CD4-positive, alpha-beta memory T cell (primary cell): ENCODE measurements at regions of chr6 and their contacts with region 1.

Region 1: DNA sequence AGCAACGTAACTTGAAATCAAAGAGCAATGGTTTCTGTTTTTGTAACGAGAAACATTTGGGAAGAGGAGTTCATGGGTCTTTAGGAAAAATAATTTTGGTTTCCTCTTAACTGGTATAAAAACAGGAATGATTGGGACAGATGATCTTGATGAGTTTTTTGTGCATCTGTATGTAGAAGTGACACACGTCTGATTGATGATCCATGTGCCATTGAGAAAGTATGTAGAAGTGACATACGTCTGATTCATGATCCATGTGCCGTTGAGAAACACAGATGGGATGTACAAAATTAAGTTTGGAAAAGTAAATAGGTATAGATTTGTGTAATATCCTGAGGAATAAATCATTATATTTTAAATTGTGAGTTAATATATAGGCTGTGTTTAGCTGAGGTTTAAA is 2.1 kb downstream of the KIAA1586 start:
- DNase-seq: no peak
- H3K4me3 ChIP-seq: no peak overlapping the region
- H3K4me3 Mint-ChIP-seq: peak overlapping the region in 7 of 8 donors; percentile 3 to 76 (median 64)
- H3K27ac ChIP-seq: no peak overlapping the region
- H3K27ac Mint-ChIP-seq: peak overlapping the region in 3 of 7 donors; percentile 15 to 62 (median 23)
- H3K4me1 ChIP-seq: peaks cover 26% of the 10 kb centered on the region
- H3K4me1 Mint-ChIP-seq: peaks cover 19 to 40% (median 26%) of the 10 kb centered on the region in 4 donors
- H3K27me3 ChIP-seq: no peaks in the 10 kb centered on the region
- H3K27me3 Mint-ChIP-seq: no peaks in the 10 kb centered on the region

Region 2: GRCh38 chr6:57089687-57090460 is 41.3 kb after region 1 on chr6 and contains the start of gene ZNF451:
- CTCF ChIA-PET with region 1: no interaction called
- POLR2A ChIA-PET with region 1: interaction called, 3 read pairs
- intact Hi-C with region 1: loop called (anchors 1 kb)
- DNase-seq: peak; percentile 93 to 97 (median 94)
- H3K4me3 ChIP-seq: peak within 1 kb of the TSS; percentile 31 to 60
- H3K4me3 Mint-ChIP-seq: peak within 1 kb of the TSS; percentile 85 to 92 (median 90)
- H3K27ac ChIP-seq: peak within 1 kb of the TSS; percentile 60
- H3K27ac Mint-ChIP-seq: peak within 1 kb of the TSS; percentile 85 to 95 (median 92)
- H3K4me1 ChIP-seq: peaks cover 35% of the 10 kb centered on the region
- H3K4me1 Mint-ChIP-seq: peaks cover 22 to 38% (median 30%) of the 10 kb centered on the region in 4 donors
- H3K27me3 ChIP-seq: no peaks in the 10 kb centered on the region
- H3K27me3 Mint-ChIP-seq: no peaks in the 10 kb centered on the region
- total RNA-seq, gene ZNF451: 83.0 to 97.7 TPM

Region 3: DNA sequence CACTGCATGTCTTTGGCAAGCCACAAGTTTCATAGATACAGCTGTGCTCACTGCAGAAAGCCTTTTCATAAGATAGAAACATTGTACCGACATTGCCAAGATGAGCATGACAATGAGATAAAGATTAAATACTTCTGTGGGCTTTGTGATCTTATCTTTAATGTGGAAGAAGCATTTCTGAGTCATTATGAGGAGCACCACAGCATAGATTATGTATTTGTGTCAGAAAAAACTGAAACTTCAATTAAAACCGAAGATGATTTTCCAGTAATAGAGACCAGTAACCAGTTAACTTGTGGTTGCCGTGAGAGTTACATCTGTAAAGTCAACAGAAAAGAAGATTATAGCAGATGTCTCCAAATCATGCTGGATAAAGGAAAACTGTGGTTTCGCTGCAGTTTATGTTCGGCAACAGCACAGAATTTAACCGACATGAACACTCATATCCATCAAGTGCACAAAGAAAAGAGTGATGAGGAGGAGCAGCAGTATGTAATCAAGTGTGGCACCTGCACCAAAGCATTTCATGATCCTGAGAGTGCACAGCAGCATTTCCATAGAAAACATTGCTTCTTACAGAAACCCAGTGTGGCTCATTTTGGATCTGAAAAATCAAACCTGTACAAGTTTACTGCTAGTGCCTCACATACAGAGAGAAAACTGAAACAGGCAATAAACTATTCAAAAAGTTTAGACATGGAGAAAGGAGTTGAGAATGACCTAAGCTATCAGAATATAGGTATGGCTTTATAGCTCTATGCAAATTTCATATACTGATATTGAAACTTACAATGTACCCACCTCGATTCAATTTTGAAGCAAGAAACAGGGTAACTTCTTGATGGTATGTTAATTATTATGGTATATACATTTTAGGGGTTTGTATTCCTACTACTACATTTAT is 99.6 kb after region 1 on chr6:
- CTCF ChIA-PET with region 1: no interaction called
- POLR2A ChIA-PET with region 1: no interaction called
- intact Hi-C with region 1: no loop called
- DNase-seq: no peak
- H3K4me3 ChIP-seq: no peak overlapping the region
- H3K4me3 Mint-ChIP-seq: no peak overlapping the region
- H3K27ac ChIP-seq: no peak overlapping the region
- H3K27ac Mint-ChIP-seq: peak overlapping the region in 4 of 7 donors; percentile 7 to 58 (median 40)
- H3K4me1 ChIP-seq: peaks cover 10% of the 10 kb centered on the region
- H3K4me1 Mint-ChIP-seq: peaks cover 13 to 21% (median 15%) of the 10 kb centered on the region in 4 donors
- H3K27me3 ChIP-seq: no peaks in the 10 kb centered on the region
- H3K27me3 Mint-ChIP-seq: no peaks in the 10 kb centered on the region

Region 4: GRCh38 chr6:57172136-57173055 is 123.8 kb after region 1 on chr6 and contains the start of gene BAG2:
- CTCF ChIA-PET with region 1: no interaction called
- POLR2A ChIA-PET with region 1: no interaction called
- intact Hi-C with region 1: loop called (anchors 1 kb)
- DNase-seq: peak; percentile 83 to 93 (median 83)
- H3K4me3 ChIP-seq: peak within 1 kb of the TSS; percentile 55 to 71
- H3K4me3 Mint-ChIP-seq: peak within 1 kb of the TSS; percentile 88 to 96 (median 92)
- H3K27ac ChIP-seq: peak within 1 kb of the TSS; percentile 57
- H3K27ac Mint-ChIP-seq: peak within 1 kb of the TSS; percentile 78 to 98 (median 94)
- H3K4me1 ChIP-seq: peaks cover 13% of the 10 kb centered on the region
- H3K4me1 Mint-ChIP-seq: peaks cover 19 to 45% (median 27%) of the 10 kb centered on the region in 4 donors
- H3K27me3 ChIP-seq: no peaks in the 10 kb centered on the region
- H3K27me3 Mint-ChIP-seq: no peaks in the 10 kb centered on the region
- total RNA-seq, gene BAG2: 3.5 to 3.7 TPM

Region 5: GRCh38 chr6:57221936-57222742 is 173.6 kb after region 1 on chr6 and contains the start of gene RAB23:
- CTCF ChIA-PET with region 1: no interaction called
- POLR2A ChIA-PET with region 1: interaction called, 3 read pairs
- intact Hi-C with region 1: loop called (anchors 1 kb)
- DNase-seq: peak; percentile 72 to 89 (median 85)
- H3K4me3 ChIP-seq: peak within 1 kb of the TSS; percentile 64 to 96
- H3K4me3 Mint-ChIP-seq: peak within 1 kb of the TSS; percentile 98 to 100 (median 98)
- H3K27ac ChIP-seq: peak within 1 kb of the TSS; percentile 35
- H3K27ac Mint-ChIP-seq: peak within 1 kb of the TSS; percentile 87 to 97 (median 93)
- H3K4me1 ChIP-seq: peaks cover 10% of the 10 kb centered on the region
- H3K4me1 Mint-ChIP-seq: peaks cover 6 to 10% (median 9%) of the 10 kb centered on the region in 4 donors
- H3K27me3 ChIP-seq: peaks cover 5% of the 10 kb centered on the region
- H3K27me3 Mint-ChIP-seq: peaks cover 13 to 27% of the 10 kb centered on the region in 2 donors
- total RNA-seq, gene RAB23: 1.4 to 1.6 TPM